Natural killer cell (primary cell): ENCODE measurements at regions of chrX and their contacts with region 1.

Region 1: DNA sequence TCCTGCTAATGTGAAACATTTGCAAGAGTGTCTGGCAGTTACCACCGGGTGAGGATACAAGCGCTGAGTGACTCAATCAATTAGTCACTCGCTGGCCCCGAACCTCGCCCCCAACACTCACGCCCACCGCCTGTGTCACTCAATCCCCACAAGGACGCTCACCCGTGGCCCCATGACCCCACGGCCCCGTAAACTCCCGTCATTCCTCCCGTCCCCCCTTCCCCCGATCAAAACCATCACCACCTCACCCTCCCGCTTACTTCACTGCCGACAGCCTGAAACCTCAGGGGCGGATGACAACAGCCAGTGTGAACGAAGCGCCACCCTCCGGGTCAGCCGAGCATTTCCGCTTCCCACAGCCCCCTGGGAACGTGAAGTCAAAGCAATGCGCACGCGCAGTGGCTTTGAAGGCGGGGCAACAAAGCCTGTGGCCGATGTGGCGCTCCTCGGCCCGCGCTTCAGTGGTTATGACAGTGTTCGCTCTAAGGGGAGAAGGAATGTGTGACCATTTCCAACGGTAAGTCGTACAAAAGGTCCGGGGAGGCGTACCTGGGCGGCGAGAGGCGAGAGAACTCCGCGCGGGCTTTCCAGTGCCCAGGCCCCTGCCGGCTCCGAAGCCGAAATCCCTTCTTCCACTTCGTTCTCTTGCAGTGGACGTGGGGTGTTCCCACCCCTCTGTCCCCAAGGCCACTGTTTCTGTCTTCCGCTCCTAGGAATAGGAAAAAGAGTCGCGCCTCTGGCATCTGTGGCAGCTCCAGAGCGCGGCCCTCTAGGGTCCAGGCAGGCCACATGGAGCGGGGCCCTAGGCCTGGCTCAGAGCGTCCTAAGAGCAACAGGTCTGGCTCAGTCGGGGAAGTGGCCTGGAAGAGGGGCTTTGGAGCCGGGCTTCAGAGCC is at the start of gene ZNF674:
- DNase-seq: peak; percentile 90 to 96
- ATAC-seq: peak; percentile 86 to 95 (median 89)
- H3K4me3 ChIP-seq: peak within 1 kb of the TSS; percentile 65
- H3K4me3 Mint-ChIP-seq: peak within 1 kb of the TSS; percentile 92
- H3K27ac ChIP-seq: peak within 1 kb of the TSS; percentile 87
- H3K27ac Mint-ChIP-seq: peak within 1 kb of the TSS; percentile 94 to 97
- H3K4me1 ChIP-seq: peaks cover 26% of the 10 kb centered on the region
- H3K4me1 Mint-ChIP-seq: peaks cover 21 to 25% of the 10 kb centered on the region in 2 donors
- H3K27me3 ChIP-seq: no peaks in the 10 kb centered on the region
- H3K27me3 Mint-ChIP-seq: no peaks in the 10 kb centered on the region
- CTCF ChIP-seq: no peak
- total RNA-seq, gene ZNF674: 2.5 to 5.3 (median 3.4) TPM

Region 2: GRCh38 chrX:45769761-45770582 is 775.4 kb before region 1 on chrX:
- intact Hi-C with region 1: loop called (anchors 10 kb)
- DNase-seq: peak; percentile 36 to 67
- ATAC-seq: peak; percentile 61 to 79 (median 67)
- H3K4me3 ChIP-seq: peak overlapping the region; percentile 73
- H3K4me3 Mint-ChIP-seq: peak overlapping the region; percentile 91
- H3K27ac ChIP-seq: peak overlapping the region; percentile 94
- H3K27ac Mint-ChIP-seq: peak overlapping the region; percentile 88 to 90
- H3K4me1 ChIP-seq: peaks cover 15% of the 10 kb centered on the region
- H3K4me1 Mint-ChIP-seq: peaks cover 42 to 47% of the 10 kb centered on the region in 2 donors
- H3K27me3 ChIP-seq: no peaks in the 10 kb centered on the region
- H3K27me3 Mint-ChIP-seq: no peaks in the 10 kb centered on the region
- CTCF ChIP-seq: no peak

Region 3: GRCh38 chrX:46446727-46447378 is 98.5 kb before region 1 on chrX:
- intact Hi-C with region 1: loop called (anchors 1 kb)
- DNase-seq: peak; percentile 80 to 91
- ATAC-seq: peak; percentile 84 to 93 (median 92)
- H3K4me3 ChIP-seq: peak overlapping the region; percentile 69
- H3K4me3 Mint-ChIP-seq: peak overlapping the region; percentile 80
- H3K27ac ChIP-seq: peak overlapping the region; percentile 95
- H3K27ac Mint-ChIP-seq: peak overlapping the region; percentile 87 to 91
- H3K4me1 ChIP-seq: peaks cover 18% of the 10 kb centered on the region
- H3K4me1 Mint-ChIP-seq: peaks cover 0 to 5% of the 10 kb centered on the region in 2 donors
- H3K27me3 ChIP-seq: no peaks in the 10 kb centered on the region
- H3K27me3 Mint-ChIP-seq: no peaks in the 10 kb centered on the region
- CTCF ChIP-seq: no peak

Region 4: GRCh38 chrX:46461653-46462191 is 83.6 kb before region 1 on chrX:
- intact Hi-C with region 1: loop called (anchors 5 kb)
- DNase-seq: no peak
- ATAC-seq: peak in 2 of 3 donors; percentile 54 to 64
- H3K4me3 ChIP-seq: no peak overlapping the region
- H3K4me3 Mint-ChIP-seq: peak overlapping the region; percentile 63
- H3K27ac ChIP-seq: peak overlapping the region; percentile 57
- H3K27ac Mint-ChIP-seq: peak overlapping the region; percentile 79 to 86
- H3K4me1 ChIP-seq: peaks cover 32% of the 10 kb centered on the region
- H3K4me1 Mint-ChIP-seq: peaks cover 14 to 20% of the 10 kb centered on the region in 2 donors
- H3K27me3 ChIP-seq: no peaks in the 10 kb centered on the region
- H3K27me3 Mint-ChIP-seq: no peaks in the 10 kb centered on the region
- CTCF ChIP-seq: no peak

Region 5: DNA sequence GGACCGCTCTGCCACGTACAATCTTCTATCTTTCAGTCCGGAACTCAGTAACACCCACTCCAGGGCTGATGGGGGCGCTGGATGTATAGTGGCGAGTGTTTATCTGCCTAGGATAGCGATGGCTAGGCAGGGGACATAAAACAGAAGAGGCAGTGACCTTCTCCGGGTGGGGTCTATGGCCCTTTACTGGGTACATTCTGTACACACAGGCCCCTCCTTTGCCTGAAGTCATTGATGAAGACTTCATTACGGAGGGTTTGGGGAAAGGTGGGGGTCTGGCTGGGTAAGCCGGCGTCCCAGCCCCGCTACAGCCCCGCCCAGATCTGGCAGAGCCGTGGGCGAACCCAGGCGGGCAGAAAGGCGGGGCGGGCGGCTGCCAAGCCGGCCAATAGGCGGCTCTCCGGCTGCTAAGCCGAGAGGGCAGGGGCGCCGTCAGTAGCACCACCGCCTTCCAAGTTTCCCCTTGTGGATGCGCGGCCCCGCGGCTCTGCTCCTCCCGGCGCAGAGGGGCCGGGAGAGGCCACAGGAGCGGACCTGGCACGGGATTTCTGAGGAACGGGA is 28.1 kb after region 1 on chrX and contains the start of gene CHST7:
- intact Hi-C with region 1: loop called (anchors 1 kb)
- DNase-seq: peak; percentile 49 to 74
- ATAC-seq: peak; percentile 63 to 76 (median 72)
- H3K4me3 ChIP-seq: peak within 1 kb of the TSS; percentile 66
- H3K4me3 Mint-ChIP-seq: peak within 1 kb of the TSS; percentile 86
- H3K27ac ChIP-seq: peak within 1 kb of the TSS; percentile 70
- H3K27ac Mint-ChIP-seq: peak within 1 kb of the TSS; percentile 35 to 95
- H3K4me1 ChIP-seq: peaks cover 31% of the 10 kb centered on the region
- H3K4me1 Mint-ChIP-seq: peaks cover 20 to 32% of the 10 kb centered on the region in 2 donors
- H3K27me3 ChIP-seq: no peaks in the 10 kb centered on the region
- H3K27me3 Mint-ChIP-seq: no peaks in the 10 kb centered on the region
- CTCF ChIP-seq: no peak
- total RNA-seq, gene CHST7: 8.7 to 15.9 (median 11.8) TPM

Region 6: DNA sequence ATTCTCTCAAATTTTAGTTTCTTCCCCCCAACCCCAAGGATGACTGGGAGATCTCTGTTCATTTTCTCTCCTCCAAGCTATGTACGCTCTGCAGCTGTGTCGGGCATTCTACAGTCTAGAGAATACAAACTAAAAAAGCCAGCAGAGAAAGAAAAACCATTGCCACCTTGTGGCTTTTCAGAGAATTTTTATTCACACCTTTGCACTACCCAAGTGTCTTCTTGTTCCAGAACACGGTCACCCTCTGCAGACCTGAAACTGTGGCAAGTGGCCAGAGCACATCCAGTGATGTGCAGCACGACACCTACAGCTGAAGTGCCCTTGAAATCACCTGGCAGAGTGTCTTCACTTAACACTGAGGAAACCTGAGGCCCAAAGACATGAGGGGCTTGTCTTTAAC is 96.8 kb after region 1 on chrX:
- intact Hi-C with region 1: no loop called
- DNase-seq: peak in 1 of 2 donors; percentile 54
- ATAC-seq: peak in 2 of 3 donors; percentile 64
- H3K4me3 ChIP-seq: no peak overlapping the region
- H3K4me3 Mint-ChIP-seq: no peak overlapping the region
- H3K27ac ChIP-seq: no peak overlapping the region
- H3K27ac Mint-ChIP-seq: no peak overlapping the region
- H3K4me1 ChIP-seq: peaks cover 4% of the 10 kb centered on the region
- H3K4me1 Mint-ChIP-seq: peaks cover 7 to 8% of the 10 kb centered on the region in 2 donors
- H3K27me3 ChIP-seq: no peaks in the 10 kb centered on the region
- H3K27me3 Mint-ChIP-seq: peaks cover 2 to 36% of the 10 kb centered on the region in 2 donors
- CTCF ChIP-seq: no peak

Region 7: DNA sequence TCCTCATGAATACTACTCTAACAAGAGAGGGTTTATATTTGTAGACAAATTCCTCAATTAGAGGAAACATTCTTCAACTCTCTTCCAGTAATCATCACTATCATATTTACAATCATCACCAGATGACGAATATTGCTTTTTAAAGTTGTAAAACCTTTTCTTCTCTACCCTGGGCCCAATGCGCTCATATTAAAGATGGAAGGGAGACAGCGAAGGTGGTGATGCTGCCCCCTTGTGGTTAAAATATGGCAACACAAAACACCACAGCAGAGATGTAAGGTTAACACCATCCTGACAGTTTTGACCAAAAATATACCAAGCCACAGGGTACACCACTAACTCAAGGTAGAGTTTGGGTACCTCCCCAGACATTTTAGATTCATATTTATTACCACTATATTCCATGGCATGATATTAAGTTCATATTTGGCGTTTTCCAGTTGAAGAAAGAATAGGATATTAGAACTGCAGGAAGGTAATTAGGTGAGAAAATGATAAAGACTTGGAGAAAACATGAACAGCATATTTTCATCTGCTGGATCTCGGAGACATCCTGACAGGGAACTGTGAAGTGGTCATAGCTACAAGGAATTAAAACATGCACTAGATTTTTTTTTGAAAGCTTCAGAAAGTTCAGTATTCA is 140.8 kb after region 1 on chrX:
- intact Hi-C with region 1: loop called (anchors 10 kb)
- DNase-seq: peak in 1 of 2 donors; percentile 71
- ATAC-seq: peak; percentile 50 to 79 (median 70)
- H3K4me3 ChIP-seq: no peak overlapping the region
- H3K4me3 Mint-ChIP-seq: no peak overlapping the region
- H3K27ac ChIP-seq: no peak overlapping the region
- H3K27ac Mint-ChIP-seq: no peak overlapping the region
- H3K4me1 ChIP-seq: no peaks in the 10 kb centered on the region
- H3K4me1 Mint-ChIP-seq: no peaks in the 10 kb centered on the region
- H3K27me3 ChIP-seq: no peaks in the 10 kb centered on the region
- H3K27me3 Mint-ChIP-seq: peaks cover 0 to 23% of the 10 kb centered on the region in 2 donors
- CTCF ChIP-seq: peak; percentile 51